Ovary (tissue), 10 donors: ENCODE measurements at regions of chr10 and their contacts with region 1.

Region 1: GRCh38 chr10:73537288-73537687 is 41.5 kb upstream of the PPP3CB start:
- DNase-seq: no peak
- H3K4me3 ChIP-seq: no peak overlapping the region
- H3K27ac ChIP-seq: no peak overlapping the region
- H3K4me1 ChIP-seq: no peaks in the 10 kb centered on the region
- H3K27me3 ChIP-seq: no peaks in the 10 kb centered on the region
- CTCF ChIP-seq: no peak
- EP300 ChIP-seq: no peak
- POLR2A ChIP-seq: no peak

Region 2: DNA sequence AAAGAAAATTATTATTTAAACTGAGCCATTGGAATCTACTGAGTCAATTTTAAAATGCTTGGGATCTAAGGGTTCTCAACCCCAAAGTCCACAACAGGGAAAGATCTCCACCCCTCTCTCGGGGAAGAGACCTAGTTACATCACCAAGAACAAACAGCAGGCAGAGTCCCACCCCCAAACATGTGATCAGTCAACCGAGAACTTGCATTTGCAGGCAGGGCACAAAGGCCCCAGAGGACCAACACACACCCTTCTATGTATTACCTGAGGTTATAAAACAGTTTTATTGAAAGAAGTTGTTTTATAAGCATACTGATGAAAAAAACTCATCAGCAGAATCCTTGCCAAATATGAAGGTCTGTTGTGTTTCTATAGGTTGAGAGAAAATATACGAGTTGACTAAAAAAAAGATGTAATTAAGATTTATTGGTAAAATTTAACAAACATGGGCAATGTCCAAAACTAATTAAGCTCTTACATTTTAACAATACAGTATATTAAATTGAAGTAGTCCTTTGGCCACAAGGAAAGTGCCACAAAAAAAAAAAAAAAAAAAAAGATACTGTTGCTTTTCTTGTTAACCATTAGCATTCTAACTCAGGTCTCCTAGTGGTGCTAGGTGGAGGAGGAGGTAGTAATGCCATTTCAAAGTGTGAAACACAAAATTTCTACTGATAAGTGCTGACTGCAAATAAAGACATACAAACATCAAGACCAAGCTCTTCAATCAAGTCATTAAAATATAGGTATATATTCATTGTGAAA is 54.8 kb after region 1 on chr10:
- intact Hi-C with region 1: no loop called
- DNase-seq: peak in 4 of 5 donors; percentile 31 to 64 (median 41)
- H3K4me3 ChIP-seq: no peak overlapping the region
- H3K27ac ChIP-seq: no peak overlapping the region
- H3K4me1 ChIP-seq: peaks cover 4% of the 10 kb centered on the region
- H3K27me3 ChIP-seq: no peaks in the 10 kb centered on the region
- CTCF ChIP-seq: no peak
- EP300 ChIP-seq: no peak
- POLR2A ChIP-seq: no peak

Region 3: GRCh38 chr10:73634421-73634820 is 97.1 kb after region 1 on chr10:
- intact Hi-C with region 1: loop called in 1 of 4 experiments (anchors 5 kb)
- DNase-seq: no peak
- H3K4me3 ChIP-seq: no peak overlapping the region
- H3K27ac ChIP-seq: no peak overlapping the region
- H3K4me1 ChIP-seq: no peaks in the 10 kb centered on the region
- H3K27me3 ChIP-seq: no peaks in the 10 kb centered on the region
- CTCF ChIP-seq: no peak
- EP300 ChIP-seq: no peak
- POLR2A ChIP-seq: no peak

Region 4: GRCh38 chr10:73899423-73899822 is 362.1 kb after region 1 on chr10:
- intact Hi-C with region 1: no loop called
- DNase-seq: no peak
- H3K4me3 ChIP-seq: no peak overlapping the region
- H3K27ac ChIP-seq: no peak overlapping the region
- H3K4me1 ChIP-seq: no peaks in the 10 kb centered on the region
- H3K27me3 ChIP-seq: no peaks in the 10 kb centered on the region
- CTCF ChIP-seq: no peak
- EP300 ChIP-seq: no peak
- POLR2A ChIP-seq: no peak